Dendritic cell treated with granulocyte-macrophage colony-stimulating factor and Interleukin-4, amounts not matched to agents 40 ng/mL and 50 ng/mL, for 4 days (primary cell): ENCODE measurements at regions of chr20 and their contacts with region 1.

Region 1: GRCh38 chr20:51639206-51639832 is 96.8 kb upstream of the NFATC2 start:
- H3K4me3 Mint-ChIP-seq: no peak overlapping the region
- H3K27ac Mint-ChIP-seq: no peak overlapping the region
- H3K4me1 Mint-ChIP-seq: peaks cover 5% of the 10 kb centered on the region
- H3K27me3 Mint-ChIP-seq: peaks cover 23% of the 10 kb centered on the region

Region 2: DNA sequence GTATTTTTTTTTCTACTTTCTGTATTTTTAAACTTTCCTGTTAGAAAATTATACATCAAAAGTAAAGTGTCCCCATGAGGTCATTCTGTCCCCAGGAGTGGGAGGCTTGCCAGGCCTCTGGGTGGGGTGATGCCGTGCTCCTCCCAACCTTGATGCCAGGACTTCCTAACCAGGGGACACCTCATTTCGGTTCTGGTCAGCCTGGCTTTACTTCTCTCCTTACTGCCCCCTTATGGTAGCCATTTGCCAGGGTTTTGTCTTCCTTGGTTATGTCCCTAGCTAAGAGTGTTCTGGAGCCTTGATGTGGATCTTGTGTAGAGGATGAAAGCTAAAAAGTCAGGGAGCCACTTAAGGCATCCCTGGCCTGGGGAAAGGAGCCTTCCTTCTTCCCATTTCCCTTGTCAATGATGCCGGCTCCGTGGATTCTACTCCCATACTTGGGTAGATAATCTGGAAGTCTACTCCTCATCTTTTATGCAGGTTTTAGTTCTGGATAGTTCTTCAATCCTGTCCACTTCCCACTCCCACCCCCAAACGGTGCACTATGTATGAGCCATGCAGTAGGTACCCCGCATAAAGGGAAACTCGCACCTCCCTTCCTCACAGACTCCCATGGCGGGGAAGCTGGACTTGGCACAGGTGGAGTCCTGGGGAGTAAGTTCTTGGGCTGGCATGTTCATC is 327.1 kb after region 1 on chr20:
- intact Hi-C with region 1: loop called (anchors 1 kb)
- H3K4me3 Mint-ChIP-seq: no peak overlapping the region
- H3K27ac Mint-ChIP-seq: no peak overlapping the region
- H3K4me1 Mint-ChIP-seq: no peaks in the 10 kb centered on the region
- H3K27me3 Mint-ChIP-seq: no peaks in the 10 kb centered on the region

Region 3: GRCh38 chr20:52083627-52084232 is 444.4 kb after region 1 on chr20:
- intact Hi-C with region 1: loop called (anchors 1 kb)
- H3K4me3 Mint-ChIP-seq: no peak overlapping the region
- H3K27ac Mint-ChIP-seq: no peak overlapping the region
- H3K4me1 Mint-ChIP-seq: peaks cover 4% of the 10 kb centered on the region
- H3K27me3 Mint-ChIP-seq: no peaks in the 10 kb centered on the region

Region 4: DNA sequence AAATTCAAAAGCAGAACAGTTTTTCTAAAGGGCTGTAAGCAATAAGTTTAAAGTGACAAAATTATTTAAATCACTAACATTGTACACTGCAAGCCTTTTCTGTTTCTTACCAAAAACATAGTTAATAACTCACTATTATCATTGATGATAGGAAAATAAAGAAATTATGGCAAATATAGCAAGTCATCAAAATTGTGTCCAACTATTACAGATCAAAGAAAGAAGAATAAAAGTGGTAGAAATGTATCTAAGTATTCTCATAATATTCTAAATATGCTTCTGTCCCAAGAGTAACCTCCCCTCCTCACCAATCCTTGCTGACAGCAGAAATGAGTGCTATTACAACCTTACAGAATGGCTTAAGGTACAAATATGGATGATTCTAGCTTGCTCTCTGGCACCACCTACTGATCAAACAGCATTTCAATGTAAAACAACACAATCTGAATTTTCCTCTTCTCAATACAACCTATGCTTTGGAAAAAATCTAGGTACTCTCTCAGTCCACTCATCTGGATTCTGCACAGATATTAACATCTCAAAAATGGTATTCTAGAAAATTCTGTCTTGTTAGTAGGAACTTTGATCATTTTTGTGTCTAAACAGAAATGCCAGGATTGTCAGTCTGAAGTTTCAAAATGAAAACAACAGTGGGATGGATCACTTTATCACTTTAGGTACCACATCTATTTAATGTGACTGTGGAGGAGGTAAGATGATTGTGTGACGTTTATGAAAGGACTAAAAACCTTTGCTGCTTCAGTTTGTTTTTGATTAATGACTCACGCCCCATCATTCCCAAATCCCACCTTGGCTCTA is 511.3 kb after region 1 on chr20:
- intact Hi-C with region 1: loop called (anchors 2 kb)
- H3K4me3 Mint-ChIP-seq: no peak overlapping the region
- H3K27ac Mint-ChIP-seq: no peak overlapping the region
- H3K4me1 Mint-ChIP-seq: no peaks in the 10 kb centered on the region
- H3K27me3 Mint-ChIP-seq: no peaks in the 10 kb centered on the region